IMR-90 (cell line): ENCODE measurements at regions of chr19 and their contacts with region 1.

Region 1: DNA sequence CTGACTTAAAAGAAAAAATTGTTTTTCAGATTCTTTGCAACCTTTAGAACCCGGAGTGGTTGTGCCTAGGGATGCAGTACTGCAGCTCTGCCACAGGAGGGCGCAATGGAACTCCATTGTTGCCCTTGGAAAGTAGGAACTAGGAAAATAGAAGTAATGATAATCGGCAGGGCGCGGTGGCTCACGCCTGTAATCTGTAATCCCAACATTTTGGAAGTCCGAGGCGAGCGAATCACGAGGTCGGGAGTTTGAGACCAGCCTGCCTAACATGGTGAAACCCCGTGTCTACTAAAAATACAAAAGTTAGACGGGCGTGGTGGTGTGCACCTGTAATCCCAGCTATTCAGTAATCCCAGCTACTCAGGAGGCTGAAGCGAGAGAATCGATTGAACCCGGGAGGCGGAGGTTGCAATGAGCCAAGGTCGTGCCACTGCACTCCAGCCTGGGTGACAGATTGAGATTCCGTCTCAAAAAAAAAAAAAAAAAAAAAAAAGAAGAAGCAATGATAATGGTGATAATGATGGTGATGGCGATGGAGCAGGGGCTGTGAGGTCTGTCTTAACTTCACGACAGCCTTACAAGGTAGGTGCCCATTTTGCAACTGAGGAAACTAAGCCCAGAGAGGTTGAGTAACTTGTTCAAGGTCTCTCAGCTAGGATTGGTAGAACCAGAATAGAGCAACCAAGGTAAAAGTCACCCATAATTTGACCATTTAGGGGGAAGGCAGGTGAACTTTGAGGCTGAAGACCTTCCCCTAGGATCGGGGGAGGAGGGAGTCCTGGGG is 5.5 kb upstream of the ADAMTS10 start:
- DNase-seq: peak; percentile 55
- ATAC-seq: peak; percentile 66
- H3K4me3 ChIP-seq: no peak overlapping the region
- H3K27ac ChIP-seq: no peak overlapping the region
- H3K4me1 ChIP-seq: peaks cover 2% of the 10 kb centered on the region; the same call in 1 of the 2 replicates
- H3K27me3 ChIP-seq: peaks cover 6% of the 10 kb centered on the region; the same call in 1 of the 2 replicates
- CTCF ChIP-seq: peak; percentile 92
- POLR2A ChIP-seq: no peak
- RAD21 ChIP-seq: peak; percentile 65

Region 2: GRCh38 chr19:8513687-8514504 is 102.1 kb before region 1 on chr19 and contains the start of gene ZNF414:
- CTCF ChIA-PET with region 1: no interaction called
- POLR2A ChIA-PET with region 1: interaction called, 11 read pairs
- dilution Hi-C with region 1: no loop called
- in situ Hi-C with region 1: no loop called
- intact Hi-C with region 1: no loop called
- DNase-seq: peak; percentile 95
- ATAC-seq: peak; percentile 96
- H3K4me3 ChIP-seq: peak within 1 kb of the TSS; percentile 84
- H3K27ac ChIP-seq: peak within 1 kb of the TSS; percentile 98
- H3K4me1 ChIP-seq: peaks cover 11% of the 10 kb centered on the region
- H3K27me3 ChIP-seq: no peaks in the 10 kb centered on the region
- CTCF ChIP-seq: no peak
- POLR2A ChIP-seq: peak; percentile 86
- RAD21 ChIP-seq: no peak
- total RNA-seq, gene ZNF414: 1.1 and 3.2 TPM in 2 replicates

Region 3: DNA sequence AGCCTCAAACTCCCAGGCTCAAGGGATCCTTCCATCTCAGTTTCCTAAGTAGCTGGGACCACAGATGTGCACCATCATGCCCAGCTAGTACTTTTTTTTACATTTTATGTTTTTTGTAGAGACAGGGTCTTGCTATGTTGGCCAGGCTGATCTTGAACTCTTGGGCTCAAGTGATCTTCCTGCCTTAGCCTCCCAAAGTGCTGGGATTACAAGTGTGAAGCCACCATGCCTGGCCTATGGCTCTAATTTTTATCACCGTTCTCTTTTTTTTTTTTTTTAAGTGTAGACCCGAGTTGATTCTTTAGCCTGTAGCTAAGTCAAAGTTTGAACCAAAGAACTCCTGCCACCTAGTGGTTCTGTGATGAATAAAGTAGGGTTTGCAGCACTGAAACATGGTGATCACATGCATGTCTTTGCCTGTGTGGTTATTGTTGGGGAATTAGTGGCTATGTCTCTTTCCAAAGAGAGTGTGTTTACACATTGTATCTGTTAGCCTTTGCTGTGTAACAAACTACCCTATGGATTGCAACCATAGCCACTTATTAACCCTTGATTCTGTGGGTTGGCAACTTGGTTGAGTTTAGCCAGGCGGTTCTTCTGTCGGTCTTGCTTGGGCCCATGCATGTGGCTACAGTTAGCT is 26.0 kb after region 1 on chr19:
- CTCF ChIA-PET with region 1: interaction called, 6 read pairs
- POLR2A ChIA-PET with region 1: no interaction called
- dilution Hi-C with region 1: no loop called
- in situ Hi-C with region 1: no loop called
- intact Hi-C with region 1: loop called (anchors 1 kb)
- DNase-seq: peak; percentile 65
- ATAC-seq: peak; percentile 71
- H3K4me3 ChIP-seq: no peak overlapping the region
- H3K27ac ChIP-seq: no peak overlapping the region
- H3K4me1 ChIP-seq: peaks cover 6% of the 10 kb centered on the region
- H3K27me3 ChIP-seq: peaks cover 10% of the 10 kb centered on the region
- CTCF ChIP-seq: peak; percentile 64
- POLR2A ChIP-seq: no peak
- RAD21 ChIP-seq: peak; percentile 61

Region 4: DNA sequence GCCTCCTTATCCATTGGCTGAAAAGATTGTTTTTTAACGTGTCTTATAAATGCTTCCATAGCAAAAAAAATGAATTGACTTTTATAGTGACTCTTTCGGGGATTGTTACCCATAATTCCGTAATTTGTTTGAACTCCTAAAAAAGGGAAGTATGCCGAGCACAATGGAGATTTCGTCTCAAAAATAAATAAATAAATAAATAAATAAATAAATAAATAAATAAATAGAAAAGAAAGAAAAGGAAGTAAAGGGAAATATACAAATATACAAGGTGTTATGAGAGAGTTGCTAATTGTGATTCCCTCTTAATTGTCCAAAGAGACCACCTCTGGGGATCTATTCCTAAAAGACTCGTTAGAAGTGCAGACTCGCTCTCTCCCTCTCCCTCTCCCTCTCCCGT is 122.4 kb after region 1 on chr19:
- CTCF ChIA-PET with region 1: no interaction called
- POLR2A ChIA-PET with region 1: no interaction called
- dilution Hi-C with region 1: no loop called
- in situ Hi-C with region 1: no loop called
- intact Hi-C with region 1: no loop called
- DNase-seq: no peak
- ATAC-seq: no peak
- H3K4me3 ChIP-seq: no peak overlapping the region
- H3K27ac ChIP-seq: no peak overlapping the region
- H3K4me1 ChIP-seq: no peaks in the 10 kb centered on the region
- H3K27me3 ChIP-seq: no peaks in the 10 kb centered on the region
- CTCF ChIP-seq: no peak
- POLR2A ChIP-seq: no peak
- RAD21 ChIP-seq: no peak